AG04449 (cell line): ENCODE measurements at regions of chr14 and their contacts with region 1.

Region 1: DNA sequence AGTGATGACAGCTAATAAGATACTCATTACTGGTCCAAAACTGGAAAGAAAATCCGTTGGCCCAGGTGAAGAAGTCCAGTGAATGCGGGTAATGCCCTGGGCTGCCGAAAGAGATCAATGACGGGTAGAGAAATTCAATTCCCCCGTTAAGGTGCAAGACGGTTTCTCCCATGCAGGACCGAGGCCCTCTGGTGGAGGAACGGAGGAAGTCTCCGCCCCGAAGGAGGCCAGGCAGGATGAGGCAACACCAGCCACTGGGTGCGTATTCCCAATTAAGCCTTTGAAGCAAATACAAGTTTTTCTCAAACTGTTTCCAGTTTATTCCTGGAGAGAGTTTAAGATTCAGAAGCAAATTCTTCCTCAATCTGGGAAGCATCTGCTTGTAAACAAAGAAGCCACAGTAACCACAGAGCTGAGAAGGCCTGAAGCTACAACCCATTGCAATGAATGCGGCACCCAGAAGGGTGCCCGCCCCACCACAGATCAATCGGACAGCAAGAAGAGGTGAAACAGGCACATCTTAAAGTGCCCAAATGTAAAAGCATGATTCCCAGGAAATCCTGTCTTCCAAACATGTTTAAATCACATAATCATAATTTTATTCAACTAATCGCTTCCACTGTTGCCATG is 118.5 kb downstream of the TTC7B start:
- DNase-seq: no peak
- H3K4me3 ChIP-seq: no peak overlapping the region
- CTCF ChIP-seq: peak; percentile 95

Region 2: DNA sequence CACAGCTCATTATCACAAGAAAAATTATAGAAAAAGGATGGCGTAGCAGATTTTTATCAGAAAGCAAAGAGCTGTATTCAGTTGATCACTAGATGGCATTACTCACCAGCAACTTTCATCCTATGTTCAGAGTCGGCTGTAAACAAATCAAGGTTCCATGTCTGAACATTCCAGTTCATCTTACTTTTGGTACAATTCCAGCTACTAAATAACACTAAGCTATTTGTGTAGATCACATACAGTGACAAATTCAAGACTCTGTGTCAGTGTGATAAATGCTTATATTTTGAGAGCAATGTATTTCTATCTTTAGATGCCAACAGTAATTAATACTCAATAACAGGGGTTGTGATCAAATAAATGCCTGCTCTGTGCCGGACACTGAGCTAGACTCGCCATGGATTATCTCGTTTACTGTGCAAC is 396.0 kb before region 1 on chr14:
- CTCF ChIA-PET with region 1: interaction called, 73 read pairs
- POLR2A ChIA-PET with region 1: no interaction called
- DNase-seq: peak; percentile 38
- H3K4me3 ChIP-seq: no peak overlapping the region
- CTCF ChIP-seq: peak; percentile 45

Region 3: DNA sequence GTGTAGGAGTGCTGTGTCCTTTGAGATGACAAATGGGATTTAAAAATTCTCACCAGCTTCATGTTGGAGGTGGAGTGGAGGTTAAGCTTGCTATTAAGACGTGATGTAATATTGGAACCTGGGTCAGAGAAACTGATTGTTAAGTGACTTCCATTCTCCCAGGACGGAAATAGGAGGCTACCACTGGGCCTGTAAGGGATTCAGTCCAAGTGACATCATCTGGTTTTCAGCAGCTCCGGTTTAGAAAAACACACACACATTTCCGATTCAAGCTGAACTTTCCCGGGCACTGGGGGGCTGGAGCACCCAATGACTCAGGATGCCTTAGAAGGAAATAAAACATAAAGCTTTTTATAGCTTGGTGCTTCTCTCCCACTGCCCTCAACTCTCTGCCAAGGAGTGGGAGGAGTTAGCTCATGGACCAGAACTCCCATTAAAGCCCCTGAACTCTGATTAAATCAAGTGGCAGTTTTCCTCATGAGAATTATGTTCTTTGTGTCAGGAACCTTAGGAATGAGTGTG is 288.4 kb before region 1 on chr14:
- CTCF ChIA-PET with region 1: interaction called, 107 read pairs
- POLR2A ChIA-PET with region 1: no interaction called
- DNase-seq: peak; percentile 92
- H3K4me3 ChIP-seq: no peak overlapping the region
- CTCF ChIP-seq: no peak

Region 4: DNA sequence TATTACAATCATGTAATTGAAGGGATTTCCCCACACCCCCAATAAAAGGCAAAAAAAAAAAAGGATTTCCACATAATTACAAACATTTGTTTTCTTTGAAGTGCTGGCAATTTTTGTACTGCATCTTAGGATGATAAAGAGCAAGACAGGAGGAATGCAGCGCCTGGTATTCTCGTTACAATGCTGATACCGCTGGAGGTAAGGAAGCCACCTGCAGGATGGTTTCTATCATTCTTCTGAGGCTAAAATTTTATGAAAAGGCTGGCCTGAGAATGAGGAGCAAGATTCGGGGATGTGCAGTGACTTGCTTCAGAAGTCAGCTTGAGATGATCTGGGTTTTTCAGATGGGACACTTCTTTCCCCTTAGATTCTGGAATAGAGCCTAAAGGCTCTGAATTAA is 16.3 kb before region 1 on chr14:
- CTCF ChIA-PET with region 1: interaction called, 22 read pairs
- POLR2A ChIA-PET with region 1: no interaction called
- DNase-seq: no peak
- H3K4me3 ChIP-seq: no peak overlapping the region
- CTCF ChIP-seq: no peak